Endothelial cell of umbilical vein (primary cell): ENCODE measurements at regions of chr3 and their contacts with region 1.

Region 1: GRCh38 chr3:177565981-177566380 is 368.7 kb upstream of the TBL1XR1 start:
- DNase-seq: no peak
- H3K4me3 ChIP-seq: no peak overlapping the region
- H3K27ac ChIP-seq: no peak overlapping the region
- H3K4me1 ChIP-seq: no peaks in the 10 kb centered on the region
- H3K27me3 ChIP-seq: no peaks in the 10 kb centered on the region
- CTCF ChIP-seq: no peak
- POLR2A ChIP-seq: no peak

Region 2: GRCh38 chr3:177468331-177468730 is 97.7 kb before region 1 on chr3:
- CTCF ChIA-PET with region 1: no interaction called
- POLR2A ChIA-PET with region 1: no interaction called
- dilution Hi-C with region 1: no loop called
- intact Hi-C with region 1: no loop called
- DNase-seq: no peak
- H3K4me3 ChIP-seq: no peak overlapping the region
- H3K27ac ChIP-seq: no peak overlapping the region
- H3K4me1 ChIP-seq: no peaks in the 10 kb centered on the region
- H3K27me3 ChIP-seq: no peaks in the 10 kb centered on the region
- CTCF ChIP-seq: no peak
- POLR2A ChIP-seq: no peak

Region 3: DNA sequence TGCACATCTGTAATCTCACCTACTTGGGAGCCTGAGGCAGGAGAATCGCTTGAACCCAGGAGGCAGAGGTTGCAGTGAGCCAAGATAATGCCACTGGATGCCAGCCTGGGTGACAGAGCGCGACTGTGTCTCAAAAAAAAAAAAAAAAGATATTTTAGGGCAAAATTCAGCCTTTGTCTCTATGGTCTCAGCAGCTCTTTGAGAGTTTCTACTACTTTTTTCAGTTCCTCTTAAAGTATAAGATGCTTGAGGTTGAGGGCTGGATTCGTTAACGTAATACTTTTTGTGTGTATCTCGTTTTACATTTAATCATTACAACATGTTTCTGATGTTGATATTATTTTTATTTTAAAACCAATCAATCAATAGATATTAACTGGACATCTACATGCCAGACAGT is 12.5 kb after region 1 on chr3:
- CTCF ChIA-PET with region 1: no interaction called
- POLR2A ChIA-PET with region 1: no interaction called
- dilution Hi-C with region 1: no loop called
- intact Hi-C with region 1: no loop called
- DNase-seq: no peak
- H3K4me3 ChIP-seq: no peak overlapping the region
- H3K27ac ChIP-seq: no peak overlapping the region
- H3K4me1 ChIP-seq: no peaks in the 10 kb centered on the region
- H3K27me3 ChIP-seq: no peaks in the 10 kb centered on the region
- CTCF ChIP-seq: no peak
- POLR2A ChIP-seq: no peak

Region 4: GRCh38 chr3:177589911-177590381 is 24.0 kb after region 1 on chr3:
- CTCF ChIA-PET with region 1: no interaction called
- POLR2A ChIA-PET with region 1: no interaction called
- dilution Hi-C with region 1: no loop called
- intact Hi-C with region 1: loop called (anchors 1 kb)
- DNase-seq: peak; percentile 72
- H3K4me3 ChIP-seq: no peak overlapping the region
- H3K27ac ChIP-seq: no peak overlapping the region
- H3K4me1 ChIP-seq: peaks cover 5% of the 10 kb centered on the region
- H3K27me3 ChIP-seq: no peaks in the 10 kb centered on the region
- CTCF ChIP-seq: no peak
- POLR2A ChIP-seq: no peak